ENCODE measurements at regions of chr3 and their contacts with region 1.

Region 1: DNA sequence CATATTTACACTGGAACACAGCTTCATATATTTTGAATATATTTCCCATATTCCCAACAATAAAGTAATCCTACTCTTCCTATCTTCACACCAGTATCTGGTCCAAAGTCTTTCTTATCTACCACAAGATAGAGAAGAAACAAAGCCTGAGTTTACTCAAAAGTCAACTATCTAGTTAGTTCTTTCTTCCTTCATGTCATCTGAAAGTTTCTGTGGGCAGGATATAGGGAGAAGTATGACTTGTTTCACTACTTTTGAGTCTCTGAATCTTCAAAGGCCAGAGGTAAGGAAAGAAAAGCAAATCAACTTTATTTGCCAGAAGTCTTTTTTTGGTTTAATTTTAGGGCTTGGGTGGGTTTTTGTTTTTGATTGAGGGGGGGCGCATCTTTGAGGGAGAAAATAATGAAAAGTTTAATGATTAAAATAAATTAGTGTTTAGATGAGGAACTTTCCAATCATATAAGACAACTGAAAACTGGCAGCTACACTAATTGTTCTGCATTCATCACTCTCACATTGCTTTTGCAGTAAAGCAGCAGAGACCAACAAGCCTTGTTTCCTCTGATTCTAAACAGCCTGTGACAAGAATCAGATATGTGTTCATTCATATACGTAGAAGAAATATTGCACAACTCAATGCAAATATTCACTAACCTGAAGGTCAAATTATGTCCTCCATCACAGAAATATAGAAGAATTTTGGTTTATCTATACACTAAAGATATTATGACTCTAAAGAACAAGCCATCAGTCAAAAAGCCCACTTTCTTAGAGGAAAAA is 421.4 kb downstream of the SHQ1 start:
- DNase-seq: no peak
- ATAC-seq: no peak
- H3K4me3 ChIP-seq: no peak overlapping the region
- H3K4me3 Mint-ChIP-seq: peak overlapping the region; percentile 36
- H3K27ac ChIP-seq: no peak overlapping the region
- H3K27ac Mint-ChIP-seq: peak overlapping the region; percentile 1
- H3K4me1 ChIP-seq: peaks cover 10% of the 10 kb centered on the region
- H3K4me1 Mint-ChIP-seq: peaks cover 82% of the 10 kb centered on the region
- H3K27me3 ChIP-seq: no peaks in the 10 kb centered on the region
- H3K27me3 Mint-ChIP-seq: no peaks in the 10 kb centered on the region
- CTCF ChIP-seq: no peak

Region 2: DNA sequence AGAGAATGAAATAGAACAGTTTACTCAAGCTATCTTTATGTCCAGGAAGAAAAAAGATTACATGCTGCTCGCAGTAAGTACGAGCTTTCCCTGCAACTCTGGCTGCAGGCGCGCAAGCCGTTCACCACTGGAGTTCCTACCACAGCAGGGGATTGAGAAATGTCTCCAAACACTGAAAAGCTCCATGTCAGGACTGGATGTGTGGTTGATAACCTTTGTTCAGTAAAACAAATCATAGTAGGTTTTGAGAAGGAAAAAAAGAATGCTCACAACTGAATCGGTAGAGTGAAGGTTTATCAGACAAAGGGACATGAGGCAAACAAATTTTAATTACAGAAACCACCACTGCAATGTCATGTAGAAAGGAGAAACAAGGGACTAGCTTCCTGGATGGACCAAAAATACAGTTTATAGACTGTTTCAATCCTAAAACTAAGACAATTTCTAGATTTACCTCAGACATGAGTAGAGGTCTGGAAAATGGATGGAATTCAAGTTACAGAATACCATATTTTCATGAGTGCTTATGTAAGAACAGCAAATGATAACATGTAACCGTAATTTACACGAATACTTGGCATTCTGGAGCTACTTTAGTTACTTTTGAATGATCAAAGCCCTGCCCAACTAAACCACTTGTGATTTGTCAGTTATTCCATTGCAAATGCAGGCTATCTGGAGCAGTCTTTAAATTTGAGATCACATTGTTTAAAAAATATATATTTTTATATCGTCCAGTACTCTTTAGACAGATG is 49.7 kb before region 1 on chr3:
- CTCF ChIA-PET with region 1: no interaction called
- POLR2A ChIA-PET with region 1: no interaction called
- intact Hi-C with region 1: no loop called
- DNase-seq: no peak
- ATAC-seq: no peak
- H3K4me3 ChIP-seq: no peak overlapping the region
- H3K4me3 Mint-ChIP-seq: no peak overlapping the region
- H3K27ac ChIP-seq: no peak overlapping the region
- H3K27ac Mint-ChIP-seq: peak overlapping the region; percentile 32
- H3K4me1 ChIP-seq: peaks cover 11% of the 10 kb centered on the region
- H3K4me1 Mint-ChIP-seq: peaks cover 79% of the 10 kb centered on the region
- H3K27me3 ChIP-seq: no peaks in the 10 kb centered on the region
- H3K27me3 Mint-ChIP-seq: no peaks in the 10 kb centered on the region
- CTCF ChIP-seq: no peak

Region 3: GRCh38 chr3:72391659-72392058 is 35.1 kb before region 1 on chr3:
- CTCF ChIA-PET with region 1: no interaction called
- POLR2A ChIA-PET with region 1: interaction called, 3 read pairs
- intact Hi-C with region 1: loop called in 1 of 2 experiments (anchors 5 kb)
- DNase-seq: no peak
- ATAC-seq: no peak
- H3K4me3 ChIP-seq: no peak overlapping the region
- H3K4me3 Mint-ChIP-seq: no peak overlapping the region
- H3K27ac ChIP-seq: no peak overlapping the region
- H3K27ac Mint-ChIP-seq: no peak overlapping the region
- H3K4me1 ChIP-seq: peaks cover 8% of the 10 kb centered on the region
- H3K4me1 Mint-ChIP-seq: peaks cover 59% of the 10 kb centered on the region
- H3K27me3 ChIP-seq: no peaks in the 10 kb centered on the region
- H3K27me3 Mint-ChIP-seq: no peaks in the 10 kb centered on the region
- CTCF ChIP-seq: no peak

Region 4: DNA sequence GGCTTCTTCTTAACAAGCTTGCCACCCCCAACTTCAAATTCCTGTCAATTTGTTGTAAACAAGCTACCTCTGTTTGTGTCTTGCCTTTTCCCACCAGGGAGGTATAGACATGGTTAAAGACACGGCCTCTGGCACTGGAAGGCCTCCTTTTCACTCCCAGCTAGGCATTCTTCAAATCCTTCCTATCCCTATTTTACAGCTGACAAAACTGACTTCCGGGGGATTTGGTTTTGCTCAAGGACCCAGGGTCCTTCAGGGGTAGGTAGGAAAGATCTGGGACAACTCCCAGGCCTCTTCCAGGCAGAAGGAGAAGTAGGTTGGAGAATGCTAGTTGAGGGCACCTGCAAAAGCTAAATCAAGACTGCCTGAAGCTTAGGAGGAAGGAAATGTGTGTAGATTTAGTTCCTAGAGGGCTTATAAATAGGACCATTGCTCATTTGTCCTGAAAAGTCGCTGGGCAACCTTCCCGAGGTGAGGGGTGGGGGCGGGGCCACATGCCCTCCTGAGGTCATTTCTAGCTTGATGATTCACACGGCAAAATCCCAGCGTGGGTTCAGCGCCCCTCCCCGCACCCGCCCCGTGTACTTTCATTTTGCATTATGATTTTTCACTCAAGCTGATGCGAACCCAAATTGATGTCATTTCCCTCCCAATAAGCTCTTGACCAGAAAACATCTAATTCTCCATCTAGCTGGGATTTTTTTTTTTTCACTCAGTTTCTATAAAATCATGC is 55.9 kb after region 1 on chr3:
- CTCF ChIA-PET with region 1: no interaction called
- POLR2A ChIA-PET with region 1: no interaction called
- intact Hi-C with region 1: no loop called
- DNase-seq: peak; percentile 9 to 81 (median 53)
- ATAC-seq: peak; percentile 76
- H3K4me3 ChIP-seq: peak overlapping the region; percentile 56
- H3K4me3 Mint-ChIP-seq: peak overlapping the region; percentile 87
- H3K27ac ChIP-seq: no peak overlapping the region
- H3K27ac Mint-ChIP-seq: peak overlapping the region; percentile 70
- H3K4me1 ChIP-seq: peaks cover 9% of the 10 kb centered on the region
- H3K4me1 Mint-ChIP-seq: peaks cover 18% of the 10 kb centered on the region
- H3K27me3 ChIP-seq: no peaks in the 10 kb centered on the region
- H3K27me3 Mint-ChIP-seq: no peaks in the 10 kb centered on the region
- CTCF ChIP-seq: no peak

Measured in CD4-positive, alpha-beta T cell (primary cell).